ENCODE measurements at regions of chrX and their contacts with region 1.

Region 1: DNA sequence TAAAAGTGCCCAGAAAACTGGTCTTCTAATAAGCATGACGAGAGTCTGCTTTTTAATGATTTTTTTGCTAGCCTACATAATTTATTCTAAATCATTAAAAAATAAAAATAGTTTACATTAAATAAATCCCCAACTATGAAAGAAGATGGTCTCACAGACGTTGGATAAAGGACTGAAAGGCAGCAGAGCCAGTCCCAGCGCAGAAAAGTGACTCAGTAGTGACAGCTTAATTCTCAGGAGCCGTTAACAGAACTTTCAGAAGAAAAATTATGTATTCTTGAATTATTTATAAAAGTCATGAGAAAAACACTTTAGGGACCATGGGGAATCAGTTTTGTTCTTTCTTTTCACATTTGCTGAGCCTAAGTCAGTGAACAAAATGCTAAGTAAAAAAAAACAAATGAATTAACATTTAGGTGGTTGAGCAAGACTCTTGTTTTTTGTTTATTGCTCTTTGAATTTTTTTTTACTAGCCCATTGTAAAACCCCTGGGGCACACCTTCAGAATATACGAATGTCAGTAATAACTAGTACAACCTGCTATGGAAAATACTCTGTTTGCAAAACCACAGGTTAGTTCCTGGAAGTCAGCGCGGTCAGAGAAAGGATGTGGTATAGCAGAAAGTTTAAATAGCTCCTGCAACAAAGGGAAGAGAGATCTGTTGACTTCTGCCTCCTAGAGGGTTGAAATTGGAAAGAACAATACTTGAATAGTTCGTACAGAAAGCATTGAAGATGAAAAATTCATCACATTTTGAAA is 50.4 kb upstream of the CCDC160 start:
- DNase-seq: peak; percentile 80
- ATAC-seq: peak; percentile 86
- H3K4me3 Mint-ChIP-seq: peak overlapping the region; percentile 74
- H3K27ac Mint-ChIP-seq: peak overlapping the region; percentile 71
- H3K4me1 Mint-ChIP-seq: peaks cover 24% of the 10 kb centered on the region
- H3K27me3 Mint-ChIP-seq: no peaks in the 10 kb centered on the region
- CTCF ChIP-seq: peak; percentile 20

Region 2: GRCh38 chrX:134171661-134172587 is 14.6 kb before region 1 on chrX:
- CTCF ChIA-PET with region 1: interaction called, 6 read pairs
- POLR2A ChIA-PET with region 1: interaction called, 4 read pairs
- intact Hi-C with region 1: loop called (anchors 2 kb)
- DNase-seq: peak; percentile 72
- ATAC-seq: peak; percentile 61
- H3K4me3 Mint-ChIP-seq: peak overlapping the region; percentile 76
- H3K27ac Mint-ChIP-seq: peak overlapping the region; percentile 89
- H3K4me1 Mint-ChIP-seq: peaks cover 15% of the 10 kb centered on the region
- H3K27me3 Mint-ChIP-seq: peaks cover 5% of the 10 kb centered on the region
- CTCF ChIP-seq: no peak